CD8-positive, alpha-beta T cell (primary cell): ENCODE measurements at regions of chrX and their contacts with region 1.

Region 1: DNA sequence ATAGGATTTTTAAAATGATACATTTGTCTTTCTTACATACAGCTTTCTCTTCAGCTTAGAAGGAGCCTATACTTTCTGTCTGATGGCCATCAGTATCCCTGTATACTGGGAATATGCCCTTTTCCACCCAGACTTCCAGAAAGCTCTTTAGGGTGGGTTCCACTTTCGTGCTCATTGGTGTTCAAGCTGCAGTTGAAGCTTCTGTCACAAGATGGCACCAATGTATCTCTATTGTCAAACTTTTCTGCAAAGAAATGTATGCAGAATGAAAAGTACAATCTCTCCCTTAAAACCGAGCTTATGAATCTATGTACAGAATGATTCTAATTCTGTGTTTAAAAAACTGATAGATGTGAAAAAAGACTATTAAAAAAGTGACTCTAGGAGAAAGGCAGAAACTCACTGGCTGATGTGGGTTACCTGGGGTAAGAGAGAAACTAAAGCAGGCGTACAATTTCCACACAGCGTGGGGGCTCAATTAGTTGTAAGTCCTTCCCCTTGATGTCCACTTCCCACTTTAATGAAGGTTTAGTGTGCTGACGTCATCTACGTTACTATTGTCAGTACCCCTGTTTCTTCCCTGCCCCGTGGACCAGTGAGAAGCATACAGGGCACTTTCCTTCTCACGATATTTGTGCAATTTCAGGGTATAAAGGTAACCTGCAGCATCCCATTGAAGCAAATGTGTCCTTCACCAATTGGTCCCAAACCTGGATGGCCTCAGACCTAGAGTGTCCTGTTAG is 57.3 kb upstream of the TCEAL2 start:
- DNase-seq: peak in 5 of 9 experiments; percentile 1 to 32 (median 20)
- ATAC-seq: no peak
- H3K4me3 ChIP-seq: no peak overlapping the region
- H3K4me3 Mint-ChIP-seq: no peak overlapping the region
- H3K27ac ChIP-seq: no peak overlapping the region
- H3K27ac Mint-ChIP-seq: no peak overlapping the region
- H3K4me1 ChIP-seq: no peaks in the 10 kb centered on the region
- H3K4me1 Mint-ChIP-seq: no peaks in the 10 kb centered on the region
- H3K27me3 ChIP-seq: no peaks in the 10 kb centered on the region
- H3K27me3 Mint-ChIP-seq: peaks cover 8% of the 10 kb centered on the region
- CTCF ChIP-seq: peak; percentile 32

Region 2: DNA sequence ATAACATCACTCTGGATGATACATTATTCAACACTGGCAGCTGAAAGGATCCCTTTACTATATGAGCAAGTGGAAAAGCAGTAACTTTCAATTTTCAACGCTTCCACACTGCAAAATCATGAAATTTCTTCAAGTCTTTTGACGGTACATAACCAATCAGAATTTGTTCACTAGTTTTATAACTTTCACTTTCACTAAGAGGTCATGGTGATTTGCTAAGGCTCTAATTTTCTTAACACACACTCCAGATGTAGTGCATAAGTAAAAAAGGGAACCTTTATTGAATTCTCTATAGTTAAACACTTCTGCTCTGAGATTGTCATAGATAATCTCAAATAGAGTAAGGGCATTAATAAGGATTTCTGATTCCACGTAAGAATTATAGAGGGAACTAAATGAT is 412.6 kb before region 1 on chrX:
- CTCF ChIA-PET with region 1: no interaction called
- POLR2A ChIA-PET with region 1: no interaction called
- intact Hi-C with region 1: no loop called
- DNase-seq: peak in 1 of 9 experiments; percentile 8
- ATAC-seq: no peak
- H3K4me3 ChIP-seq: no peak overlapping the region
- H3K4me3 Mint-ChIP-seq: peak overlapping the region; percentile 70
- H3K27ac ChIP-seq: no peak overlapping the region
- H3K27ac Mint-ChIP-seq: peak overlapping the region; percentile 66
- H3K4me1 ChIP-seq: peaks cover 4% of the 10 kb centered on the region
- H3K4me1 Mint-ChIP-seq: peaks cover 22% of the 10 kb centered on the region
- H3K27me3 ChIP-seq: no peaks in the 10 kb centered on the region
- H3K27me3 Mint-ChIP-seq: no peaks in the 10 kb centered on the region
- CTCF ChIP-seq: no peak

Region 3: DNA sequence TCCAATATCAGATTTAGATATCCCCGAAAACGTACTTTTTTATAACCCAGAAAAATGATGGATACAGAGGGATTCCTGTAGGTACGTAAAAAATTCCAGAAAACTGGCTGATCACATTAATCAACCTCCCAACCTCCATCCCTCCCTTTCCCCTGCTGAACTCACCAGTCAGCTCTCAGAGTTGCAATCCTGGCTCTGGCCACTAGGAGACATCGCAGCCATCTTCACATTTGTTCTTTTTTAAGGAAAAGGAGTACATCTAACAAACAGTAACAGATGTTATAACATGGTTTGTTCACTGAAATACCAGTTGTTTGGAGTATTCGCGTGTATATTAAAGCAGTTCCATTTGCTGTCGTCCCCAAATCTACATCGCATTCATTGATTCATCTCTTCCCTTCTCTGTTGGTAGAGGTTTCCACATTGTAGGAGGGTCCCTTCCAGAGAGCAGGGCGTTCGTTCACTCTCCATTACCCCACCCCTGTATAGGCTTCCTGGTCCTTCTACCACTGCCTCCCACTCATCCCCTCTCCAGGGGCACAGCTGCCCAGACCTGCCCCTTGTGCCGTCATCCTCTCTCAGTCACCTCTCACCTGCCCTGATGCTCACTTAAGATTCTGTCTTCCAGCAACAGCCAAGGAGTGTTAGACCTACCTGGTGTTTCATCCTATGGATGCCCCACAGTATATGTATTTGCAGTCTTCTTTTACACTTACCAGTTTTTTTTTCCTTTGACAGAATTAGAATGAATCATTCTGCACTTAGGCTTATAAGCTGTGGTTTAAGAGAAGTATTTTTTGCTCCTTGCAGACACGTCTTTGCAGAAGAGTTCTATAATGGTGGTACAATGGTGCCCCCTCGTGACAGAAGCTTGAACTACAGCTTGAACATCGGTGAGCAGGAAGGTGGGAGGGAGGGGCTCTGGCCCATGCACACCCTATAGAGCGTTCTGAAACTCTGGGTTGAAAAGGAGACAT is 832.1 kb after region 1 on chrX:
- CTCF ChIA-PET with region 1: interaction called, 6 read pairs
- POLR2A ChIA-PET with region 1: no interaction called
- intact Hi-C with region 1: loop called (anchors 2 kb)
- DNase-seq: peak; percentile 41 to 77 (median 67)
- ATAC-seq: peak; percentile 92
- H3K4me3 ChIP-seq: no peak overlapping the region
- H3K4me3 Mint-ChIP-seq: no peak overlapping the region
- H3K27ac ChIP-seq: no peak overlapping the region
- H3K27ac Mint-ChIP-seq: no peak overlapping the region
- H3K4me1 ChIP-seq: peaks cover 3% of the 10 kb centered on the region
- H3K4me1 Mint-ChIP-seq: peaks cover 5% of the 10 kb centered on the region
- H3K27me3 ChIP-seq: no peaks in the 10 kb centered on the region
- H3K27me3 Mint-ChIP-seq: no peaks in the 10 kb centered on the region
- CTCF ChIP-seq: peak; percentile 51

Region 4: GRCh38 chrX:103157496-103158320 is 1089.6 kb after region 1 on chrX:
- CTCF ChIA-PET with region 1: no interaction called
- POLR2A ChIA-PET with region 1: no interaction called
- intact Hi-C with region 1: loop called in 1 of 2 experiments (anchors 5 kb)
- DNase-seq: peak in 3 of 9 experiments; percentile 7 to 20 (median 10)
- ATAC-seq: no peak
- H3K4me3 ChIP-seq: no peak overlapping the region
- H3K4me3 Mint-ChIP-seq: no peak overlapping the region
- H3K27ac ChIP-seq: no peak overlapping the region
- H3K27ac Mint-ChIP-seq: no peak overlapping the region
- H3K4me1 ChIP-seq: no peaks in the 10 kb centered on the region
- H3K4me1 Mint-ChIP-seq: no peaks in the 10 kb centered on the region
- H3K27me3 ChIP-seq: no peaks in the 10 kb centered on the region
- H3K27me3 Mint-ChIP-seq: no peaks in the 10 kb centered on the region
- CTCF ChIP-seq: peak; percentile 50